ENCODE measurements at regions of chr10 and their contacts with region 1.

Region 1: DNA sequence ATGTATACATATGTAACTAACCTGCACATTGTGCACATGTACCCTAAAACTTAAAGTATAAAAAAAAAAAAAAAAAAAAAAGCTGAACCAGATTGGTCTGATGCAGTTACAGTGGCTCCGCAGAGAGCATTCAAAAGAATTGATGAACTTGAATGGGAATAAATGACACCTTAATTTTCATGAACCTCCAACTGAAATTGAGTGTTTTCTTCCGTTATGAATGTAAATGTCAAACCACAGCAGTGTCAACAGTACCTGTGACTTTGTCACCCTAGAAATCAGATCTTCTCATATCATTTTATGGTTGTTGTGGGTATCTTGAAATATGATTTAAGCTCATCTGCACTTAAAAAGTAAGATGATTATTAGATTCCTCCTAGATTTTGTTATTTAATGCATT is 32.7 kb upstream of the SRGN start:
- DNase-seq: no peak
- ATAC-seq: no peak
- H3K4me3 Mint-ChIP-seq: no peak overlapping the region
- H3K27ac Mint-ChIP-seq: no peak overlapping the region
- H3K4me1 Mint-ChIP-seq: peaks cover 28% of the 10 kb centered on the region
- H3K27me3 Mint-ChIP-seq: no peaks in the 10 kb centered on the region
- CTCF ChIP-seq: no peak

Region 2: DNA sequence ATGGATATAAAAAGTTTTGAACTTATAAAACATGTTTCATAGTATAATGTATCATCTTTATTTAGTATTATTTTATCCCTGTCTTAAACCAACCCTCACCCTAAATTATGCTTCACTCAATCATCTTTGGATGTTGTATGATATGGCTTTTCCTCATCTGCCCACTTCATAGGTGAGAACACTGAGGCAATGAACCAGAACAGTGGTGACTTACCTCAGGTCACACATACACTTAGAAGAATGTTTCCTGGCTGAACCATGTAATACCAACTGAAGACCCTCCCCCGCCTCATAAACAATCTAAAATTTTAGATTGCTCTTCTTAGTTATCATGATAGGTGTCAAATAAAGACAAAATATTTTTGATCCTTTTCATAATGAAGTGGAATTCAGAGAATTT is 250.5 kb before region 1 on chr10:
- CTCF ChIA-PET with region 1: no interaction called
- POLR2A ChIA-PET with region 1: no interaction called
- intact Hi-C with region 1: no loop called
- DNase-seq: no peak
- ATAC-seq: no peak
- H3K4me3 Mint-ChIP-seq: no peak overlapping the region
- H3K27ac Mint-ChIP-seq: no peak overlapping the region
- H3K4me1 Mint-ChIP-seq: peaks cover 4% of the 10 kb centered on the region
- H3K27me3 Mint-ChIP-seq: no peaks in the 10 kb centered on the region
- CTCF ChIP-seq: no peak

Region 3: GRCh38 chr10:69337296-69338132 is 282.3 kb after region 1 on chr10:
- CTCF ChIA-PET with region 1: no interaction called
- POLR2A ChIA-PET with region 1: interaction called, 12 read pairs
- intact Hi-C with region 1: no loop called
- DNase-seq: no peak
- ATAC-seq: no peak
- H3K4me3 Mint-ChIP-seq: no peak overlapping the region
- H3K27ac Mint-ChIP-seq: no peak overlapping the region
- H3K4me1 Mint-ChIP-seq: peaks cover 45% of the 10 kb centered on the region
- H3K27me3 Mint-ChIP-seq: no peaks in the 10 kb centered on the region
- CTCF ChIP-seq: no peak

Region 4: DNA sequence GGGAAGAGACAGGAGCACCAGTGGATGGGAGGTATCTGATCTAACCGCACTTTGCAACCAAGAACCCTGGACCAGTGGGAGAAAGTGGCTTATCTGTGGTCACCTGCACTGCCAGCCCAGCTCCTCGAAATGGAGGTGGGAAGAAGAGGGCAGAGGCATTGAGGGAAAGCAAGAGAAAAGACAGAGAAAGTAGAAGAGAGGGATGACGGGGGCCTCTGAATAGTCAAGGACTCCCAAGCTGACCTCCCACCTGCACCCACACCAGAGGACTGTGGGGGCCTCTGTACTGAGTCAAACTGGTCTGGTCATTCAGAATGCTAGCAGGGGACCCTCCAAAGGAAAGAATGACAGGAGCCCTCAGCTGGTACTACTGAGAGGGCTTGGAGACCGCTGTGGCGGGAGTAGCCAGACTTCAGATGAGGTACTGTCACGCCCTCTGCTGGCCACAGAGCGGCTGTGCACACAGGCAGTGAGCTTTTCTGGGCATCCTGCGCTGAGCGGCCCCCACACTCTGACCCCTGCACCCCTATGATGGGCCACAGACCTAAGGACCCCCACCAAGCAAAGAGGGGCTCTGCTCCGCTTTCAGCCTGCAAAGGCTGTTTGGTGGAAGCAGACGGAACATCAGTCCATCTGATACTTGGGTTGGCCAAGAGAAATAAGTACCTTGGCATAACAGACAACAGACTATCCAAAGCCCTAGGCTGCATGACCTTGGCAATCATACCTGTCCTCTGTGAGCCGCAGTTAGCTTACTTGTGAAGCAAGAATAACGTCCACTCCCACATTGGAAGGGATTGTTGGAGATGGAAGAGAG is 859.4 kb after region 1 on chr10:
- CTCF ChIA-PET with region 1: no interaction called
- POLR2A ChIA-PET with region 1: no interaction called
- intact Hi-C with region 1: no loop called
- DNase-seq: peak; percentile 22
- ATAC-seq: peak; percentile 31
- H3K4me3 Mint-ChIP-seq: no peak overlapping the region
- H3K27ac Mint-ChIP-seq: no peak overlapping the region
- H3K4me1 Mint-ChIP-seq: no peaks in the 10 kb centered on the region
- H3K27me3 Mint-ChIP-seq: peaks cover 13% of the 10 kb centered on the region
- CTCF ChIP-seq: no peak